KBM-7 (cell line): ENCODE measurements at regions of chr2 and their contacts with region 1.

Region 1: DNA sequence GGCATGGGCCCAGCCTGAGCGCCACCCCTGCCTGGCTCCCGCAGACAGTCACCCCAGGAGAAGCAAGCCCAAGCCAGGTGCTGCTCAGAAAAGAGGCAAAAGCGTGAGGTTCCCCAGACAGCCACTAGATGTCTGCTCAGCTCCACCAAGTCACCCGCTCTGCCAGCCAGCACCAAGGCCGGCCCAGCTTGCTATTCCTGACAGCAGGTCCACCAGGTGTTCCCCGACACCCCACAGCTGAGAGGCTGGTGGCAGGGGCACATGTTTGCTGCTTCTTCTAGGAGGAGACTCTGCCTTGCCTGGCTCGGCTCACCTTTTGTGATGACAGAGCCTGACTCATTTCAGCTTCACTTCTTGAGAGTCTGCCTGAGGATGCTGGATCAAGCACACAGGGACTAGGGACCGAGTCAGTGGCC is 206.7 kb downstream of the MGAT5 start:
- DNase-seq: peak; percentile 63

Region 2: DNA sequence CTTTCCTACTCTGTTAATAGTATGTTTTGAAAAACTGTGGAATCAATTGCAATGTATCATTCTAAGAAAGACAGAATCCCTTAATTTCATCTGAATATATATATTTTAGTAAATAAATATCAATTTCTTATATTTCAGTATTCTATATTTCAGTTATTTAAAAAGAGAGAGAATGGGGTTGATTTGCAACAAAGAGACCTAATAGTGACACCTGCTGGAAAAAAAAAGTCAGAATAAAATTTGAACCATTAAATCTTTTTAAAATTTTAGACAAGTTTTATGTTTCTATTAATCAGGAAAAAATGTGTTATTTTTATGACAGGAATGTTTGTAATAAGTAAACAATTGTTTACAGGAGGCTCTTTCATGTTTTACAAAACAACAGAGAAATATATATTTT is 437.3 kb after region 1 on chr2:
- in situ Hi-C with region 1: loop called (anchors 25 kb)
- DNase-seq: peak; percentile 35